OCI-LY7 (cell line): ENCODE measurements at regions of chr2 and their contacts with region 1.

Region 1: GRCh38 chr2:136572335-136572734 is 193.0 kb upstream of the THSD7B start:
- DNase-seq: no peak
- H3K4me3 ChIP-seq: no peak overlapping the region
- H3K27ac ChIP-seq: no peak overlapping the region
- H3K4me1 ChIP-seq: no peaks in the 10 kb centered on the region
- CTCF ChIP-seq: no peak

Region 2: DNA sequence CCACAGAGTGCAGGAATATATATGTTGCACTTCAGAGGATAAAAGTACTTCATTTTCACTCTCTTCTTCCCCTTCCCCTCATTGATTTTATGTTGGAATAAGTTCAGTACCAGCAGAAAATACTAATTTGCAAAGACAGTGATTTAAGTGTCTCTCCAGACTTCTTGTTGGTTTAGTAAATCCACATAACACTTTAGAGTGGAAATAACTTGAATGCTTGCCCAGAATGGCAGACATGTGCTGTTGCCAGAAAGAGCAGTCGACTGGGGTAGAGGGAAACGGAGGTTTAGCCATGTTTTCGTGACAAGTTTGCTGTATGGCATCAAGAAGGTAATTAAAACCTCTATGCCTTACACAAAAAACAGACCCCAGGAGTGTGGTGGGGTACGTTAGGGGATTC is 208.4 kb before region 1 on chr2:
- CTCF ChIA-PET with region 1: no interaction called
- POLR2A ChIA-PET with region 1: no interaction called
- intact Hi-C with region 1: no loop called
- DNase-seq: no peak
- H3K4me3 ChIP-seq: no peak overlapping the region
- H3K27ac ChIP-seq: no peak overlapping the region
- H3K4me1 ChIP-seq: peaks cover 37% of the 10 kb centered on the region
- CTCF ChIP-seq: no peak

Region 3: GRCh38 chr2:136531731-136532130 is 40.6 kb before region 1 on chr2:
- CTCF ChIA-PET with region 1: no interaction called
- POLR2A ChIA-PET with region 1: interaction called, 3 read pairs
- intact Hi-C with region 1: loop called (anchors 1 kb)
- DNase-seq: no peak
- H3K4me3 ChIP-seq: no peak overlapping the region
- H3K27ac ChIP-seq: no peak overlapping the region
- H3K4me1 ChIP-seq: no peaks in the 10 kb centered on the region
- CTCF ChIP-seq: no peak